Activated naive CD4-positive, alpha-beta T cell treated with anti-CD3 and anti-CD28 coated beads for 36 hours (primary cell): ENCODE measurements at regions of chr15 and their contacts with region 1.

Region 1: DNA sequence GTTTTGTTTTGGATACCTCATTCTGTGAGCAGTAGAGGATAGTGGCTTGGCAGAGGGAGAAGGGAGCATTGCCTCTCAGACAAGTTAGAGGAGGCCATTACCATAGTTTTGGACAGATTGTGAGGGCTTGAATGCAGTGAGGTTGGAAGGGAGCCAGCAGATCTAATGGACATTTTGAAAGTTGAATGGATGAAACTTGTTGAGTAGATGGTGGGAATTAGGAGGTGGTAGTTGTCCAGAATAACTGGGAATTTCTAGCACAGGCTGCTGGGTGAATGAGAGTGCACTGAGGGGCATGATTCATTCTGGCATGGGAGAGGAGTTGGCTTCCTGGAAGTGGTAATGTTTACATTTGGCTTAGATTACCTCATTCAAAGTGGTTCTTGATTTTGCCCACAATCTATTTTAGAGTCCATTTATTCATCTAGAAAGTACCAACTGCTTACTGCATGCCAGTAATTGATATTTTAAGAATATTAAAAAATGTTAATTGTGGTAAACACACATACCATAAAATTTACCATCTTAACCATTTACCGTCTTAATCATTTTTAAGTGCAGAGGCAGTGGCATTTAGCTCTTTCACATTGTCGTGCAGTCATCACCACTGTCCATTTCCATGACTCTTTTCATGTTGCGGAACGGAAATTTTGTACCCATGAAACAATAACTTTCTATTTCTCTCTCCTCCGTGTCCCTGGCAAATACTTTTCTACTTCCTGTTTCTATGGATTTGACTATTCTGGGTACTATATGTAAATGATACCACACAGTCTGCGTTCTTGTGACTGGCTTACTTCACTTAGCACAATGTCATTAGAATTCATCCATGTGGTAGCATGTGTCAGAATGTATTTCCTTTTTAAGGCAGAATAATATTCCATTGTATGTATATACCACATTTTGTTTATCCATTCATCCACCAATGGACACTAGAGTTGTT is 27.7 kb downstream of the AKAP13 start:
- DNase-seq: peak; percentile 67
- H3K4me3 Mint-ChIP-seq: peak overlapping the region; percentile 58
- H3K27ac Mint-ChIP-seq: peak overlapping the region; percentile 88
- H3K4me1 Mint-ChIP-seq: peaks cover 86% of the 10 kb centered on the region
- H3K27me3 Mint-ChIP-seq: no peaks in the 10 kb centered on the region

Region 2: DNA sequence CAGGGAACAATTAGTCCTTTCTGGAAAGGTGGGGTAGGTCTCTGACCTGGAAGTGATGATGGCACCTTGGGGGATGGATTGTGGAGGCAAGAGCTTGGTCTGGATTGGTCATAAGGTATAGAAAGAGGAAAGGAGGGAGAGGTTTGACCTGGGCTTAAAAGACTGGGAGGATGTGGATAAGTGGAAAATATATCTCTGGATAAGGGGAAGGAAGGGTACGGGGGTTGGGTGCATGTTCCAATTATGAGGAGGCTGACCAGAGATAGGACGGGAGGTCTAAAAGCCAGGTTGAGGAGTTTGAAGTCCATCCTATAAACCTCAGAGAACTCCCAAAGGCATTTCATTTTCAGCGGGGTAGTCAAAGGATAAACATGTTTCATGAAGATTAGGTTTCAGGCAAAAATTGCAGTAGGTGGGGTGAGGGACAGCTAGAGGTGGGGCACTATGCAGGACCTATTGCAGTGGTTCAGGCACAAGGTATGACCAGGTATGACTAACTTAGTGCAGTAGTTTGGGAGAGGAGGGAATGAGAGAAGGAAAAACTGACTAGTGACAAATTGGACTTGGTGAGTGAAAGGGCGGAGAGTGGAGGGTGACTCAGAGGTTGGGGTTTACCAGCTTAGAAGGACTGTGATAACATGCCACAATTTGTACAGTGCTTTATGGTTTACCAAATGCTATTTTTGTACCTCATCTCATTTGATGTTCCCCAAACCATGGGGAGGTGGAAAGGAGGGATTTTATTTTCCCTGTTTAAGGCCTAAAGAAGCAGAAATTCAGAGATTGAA is 415.7 kb before region 1 on chr15:
- CTCF ChIA-PET with region 1: no interaction called
- intact Hi-C with region 1: loop called (anchors 1 kb)
- DNase-seq: peak; percentile 71
- H3K4me3 Mint-ChIP-seq: peak overlapping the region; percentile 1
- H3K27ac Mint-ChIP-seq: peak overlapping the region; percentile 68
- H3K4me1 Mint-ChIP-seq: peaks cover 62% of the 10 kb centered on the region
- H3K27me3 Mint-ChIP-seq: no peaks in the 10 kb centered on the region

Region 3: GRCh38 chr15:85354461-85354860 is 53.6 kb before region 1 on chr15:
- CTCF ChIA-PET with region 1: no interaction called
- intact Hi-C with region 1: loop called (anchors 1 kb)
- DNase-seq: no peak
- H3K4me3 Mint-ChIP-seq: no peak overlapping the region
- H3K27ac Mint-ChIP-seq: no peak overlapping the region
- H3K4me1 Mint-ChIP-seq: peaks cover 11% of the 10 kb centered on the region
- H3K27me3 Mint-ChIP-seq: peaks cover 2% of the 10 kb centered on the region

Region 4: GRCh38 chr15:85430406-85431204 is 22.5 kb after region 1 on chr15:
- CTCF ChIA-PET with region 1: interaction called, 13 read pairs
- intact Hi-C with region 1: loop called (anchors 1 kb)
- DNase-seq: peak; percentile 65
- H3K4me3 Mint-ChIP-seq: no peak overlapping the region
- H3K27ac Mint-ChIP-seq: no peak overlapping the region
- H3K4me1 Mint-ChIP-seq: peaks cover 54% of the 10 kb centered on the region
- H3K27me3 Mint-ChIP-seq: no peaks in the 10 kb centered on the region

Region 5: GRCh38 chr15:85657132-85657531 is 249.1 kb after region 1 on chr15:
- CTCF ChIA-PET with region 1: no interaction called
- intact Hi-C with region 1: no loop called
- DNase-seq: no peak
- H3K4me3 Mint-ChIP-seq: no peak overlapping the region
- H3K27ac Mint-ChIP-seq: no peak overlapping the region
- H3K4me1 Mint-ChIP-seq: no peaks in the 10 kb centered on the region
- H3K27me3 Mint-ChIP-seq: no peaks in the 10 kb centered on the region

Region 6: DNA sequence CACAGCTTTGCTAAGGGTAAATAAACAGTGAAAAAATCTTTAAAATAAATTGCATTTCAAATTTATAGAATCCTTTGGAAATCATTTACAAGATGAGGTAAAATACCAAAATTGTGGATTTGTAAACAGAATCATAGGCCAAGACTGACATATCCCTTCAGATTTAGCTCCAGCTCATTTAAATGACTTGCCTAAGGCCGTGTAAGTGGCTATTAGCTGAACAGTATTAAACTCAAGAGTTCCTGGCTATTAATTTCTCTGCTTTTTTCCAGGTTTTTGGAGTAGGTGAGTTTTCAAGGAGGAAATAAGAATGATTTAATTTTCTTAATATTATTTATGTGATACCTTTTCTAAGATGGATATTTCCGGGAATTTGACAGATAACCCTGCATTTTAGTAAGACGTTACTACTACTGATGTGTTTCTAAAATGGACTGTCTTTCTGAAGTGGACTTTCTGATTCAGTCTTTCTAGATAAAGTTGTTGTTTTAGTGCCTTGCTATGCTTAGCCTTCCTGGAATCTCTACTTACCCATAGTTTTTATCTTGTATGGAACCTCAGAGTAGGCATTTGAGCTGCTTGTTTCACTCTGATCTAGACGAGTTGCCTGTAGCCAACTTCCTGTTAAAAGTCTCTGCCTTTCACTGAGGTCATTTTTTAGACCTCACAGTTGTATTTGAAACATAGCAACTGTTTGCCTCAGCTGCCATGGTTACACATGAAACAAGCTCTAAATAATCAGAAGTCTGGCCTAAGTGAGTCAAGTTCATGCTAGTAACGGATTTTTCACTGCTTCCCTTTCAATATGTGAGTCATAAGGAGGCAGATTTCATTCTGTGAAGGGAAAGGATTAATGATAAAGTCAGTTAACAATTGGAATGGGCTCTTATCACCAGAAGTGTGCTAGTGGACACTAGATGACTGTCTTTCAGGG is 259.7 kb after region 1 on chr15:
- CTCF ChIA-PET with region 1: no interaction called
- intact Hi-C with region 1: loop called (anchors 1 kb)
- DNase-seq: peak; percentile 78
- H3K4me3 Mint-ChIP-seq: no peak overlapping the region
- H3K27ac Mint-ChIP-seq: peak overlapping the region; percentile 93
- H3K4me1 Mint-ChIP-seq: peaks cover 26% of the 10 kb centered on the region
- H3K27me3 Mint-ChIP-seq: no peaks in the 10 kb centered on the region